ENCODE measurements at regions of chr11 and their contacts with region 1.

Region 1: GRCh38 chr11:120801801-120802689 is 221.9 kb upstream of the TBCEL start:
- DNase-seq: peak; percentile 83
- H3K4me3 ChIP-seq: no peak overlapping the region; a peak in 1 of 4 replicates
- H3K27ac ChIP-seq: no peak overlapping the region
- H3K4me1 ChIP-seq: peaks cover 0 to 18% of the 10 kb centered on the region in 2 experiments; a peak in 1 of 4 replicates
- H3K27me3 ChIP-seq: no peaks in the 10 kb centered on the region
- CTCF ChIP-seq: peak; percentile 80
- EP300 ChIP-seq: no peak
- RAD21 ChIP-seq: peak; percentile 85

Region 2: DNA sequence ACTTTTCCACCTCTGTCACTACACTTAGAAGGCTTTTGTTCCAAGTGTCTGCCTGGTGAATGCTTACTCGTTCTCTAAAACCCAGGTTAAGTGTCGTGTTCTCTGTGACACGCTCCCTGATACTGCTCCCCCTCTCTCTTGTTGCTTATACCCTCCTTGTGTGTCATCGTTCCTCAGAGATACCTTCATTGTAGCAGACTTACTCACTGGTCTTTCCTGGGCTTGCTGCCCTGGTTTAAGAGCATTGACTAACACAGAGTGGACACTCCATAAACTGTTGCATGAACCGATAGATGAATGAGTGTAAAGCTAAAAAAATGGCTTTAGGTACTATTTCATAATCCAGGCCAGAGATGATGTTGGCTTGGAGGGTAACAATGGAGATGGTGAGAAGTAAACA is 119.2 kb before region 1 on chr11:
- CTCF ChIA-PET with region 1: interaction called, 19 read pairs
- POLR2A ChIA-PET with region 1: no interaction called
- DNase-seq: no peak
- H3K4me3 ChIP-seq: no peak overlapping the region
- H3K27ac ChIP-seq: no peak overlapping the region
- H3K4me1 ChIP-seq: peaks cover 0 to 3% of the 10 kb centered on the region in 2 experiments; a peak in 1 of 4 replicates
- H3K27me3 ChIP-seq: peaks cover 8% of the 10 kb centered on the region; the same call in 1 of the 2 replicates
- CTCF ChIP-seq: no peak
- EP300 ChIP-seq: no peak
- RAD21 ChIP-seq: no peak

Region 3: GRCh38 chr11:120719348-120719747 is 82.7 kb before region 1 on chr11:
- CTCF ChIA-PET with region 1: interaction called, 13 read pairs
- POLR2A ChIA-PET with region 1: no interaction called
- DNase-seq: no peak
- H3K4me3 ChIP-seq: no peak overlapping the region
- H3K27ac ChIP-seq: no peak overlapping the region
- H3K4me1 ChIP-seq: peaks cover 0 to 3% of the 10 kb centered on the region in 2 experiments; a peak in 1 of 4 replicates
- H3K27me3 ChIP-seq: no peaks in the 10 kb centered on the region
- CTCF ChIP-seq: no peak
- EP300 ChIP-seq: no peak
- RAD21 ChIP-seq: no peak

Region 4: DNA sequence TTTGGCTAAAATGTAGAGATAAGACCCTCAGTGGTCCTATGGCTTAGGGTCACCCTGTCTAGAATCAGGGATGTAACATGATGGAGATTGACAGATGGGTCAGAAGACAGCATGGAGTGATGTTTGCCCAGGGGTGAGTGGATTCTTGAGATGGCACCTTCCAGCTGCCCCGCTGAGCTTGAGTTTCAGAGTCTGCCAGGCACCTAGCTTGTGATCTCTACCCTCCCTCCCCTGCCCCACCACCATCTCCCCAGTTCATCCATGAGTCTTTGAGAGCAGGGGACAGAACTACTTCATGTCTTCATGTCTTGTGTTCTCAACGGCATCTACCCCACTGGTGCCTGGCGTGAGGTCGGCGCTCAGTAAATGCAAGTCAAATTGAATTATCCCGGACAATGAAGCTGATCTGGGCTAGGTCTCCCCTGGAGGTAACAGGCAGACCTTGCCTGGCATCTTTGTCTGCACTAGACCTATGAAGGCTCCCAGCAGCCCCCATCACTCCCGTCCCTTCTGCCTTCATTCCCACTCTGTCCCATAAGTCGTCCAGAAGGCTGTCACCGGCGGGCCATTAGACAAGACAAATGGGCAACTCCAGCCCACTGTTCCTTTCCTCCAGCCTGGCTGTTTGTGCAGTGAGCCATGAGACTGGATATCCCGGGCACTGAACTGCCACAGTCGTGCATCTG is 17.3 kb before region 1 on chr11:
- CTCF ChIA-PET with region 1: interaction called, 29 read pairs
- POLR2A ChIA-PET with region 1: no interaction called
- DNase-seq: peak; percentile 60
- H3K4me3 ChIP-seq: no peak overlapping the region
- H3K27ac ChIP-seq: 0 out of 4 replicates have a peak overlapping the region, but pooled peaks of 1 of the 2 experiments have one; percentile 19
- H3K4me1 ChIP-seq: peaks cover 0 to 17% of the 10 kb centered on the region in 2 experiments; a peak in 1 of 4 replicates
- H3K27me3 ChIP-seq: no peaks in the 10 kb centered on the region
- CTCF ChIP-seq: no peak
- EP300 ChIP-seq: 0 out of 4 replicates have a peak, but pooled peaks of 1 of the 2 experiments have one; percentile 17
- RAD21 ChIP-seq: no peak

Region 5: DNA sequence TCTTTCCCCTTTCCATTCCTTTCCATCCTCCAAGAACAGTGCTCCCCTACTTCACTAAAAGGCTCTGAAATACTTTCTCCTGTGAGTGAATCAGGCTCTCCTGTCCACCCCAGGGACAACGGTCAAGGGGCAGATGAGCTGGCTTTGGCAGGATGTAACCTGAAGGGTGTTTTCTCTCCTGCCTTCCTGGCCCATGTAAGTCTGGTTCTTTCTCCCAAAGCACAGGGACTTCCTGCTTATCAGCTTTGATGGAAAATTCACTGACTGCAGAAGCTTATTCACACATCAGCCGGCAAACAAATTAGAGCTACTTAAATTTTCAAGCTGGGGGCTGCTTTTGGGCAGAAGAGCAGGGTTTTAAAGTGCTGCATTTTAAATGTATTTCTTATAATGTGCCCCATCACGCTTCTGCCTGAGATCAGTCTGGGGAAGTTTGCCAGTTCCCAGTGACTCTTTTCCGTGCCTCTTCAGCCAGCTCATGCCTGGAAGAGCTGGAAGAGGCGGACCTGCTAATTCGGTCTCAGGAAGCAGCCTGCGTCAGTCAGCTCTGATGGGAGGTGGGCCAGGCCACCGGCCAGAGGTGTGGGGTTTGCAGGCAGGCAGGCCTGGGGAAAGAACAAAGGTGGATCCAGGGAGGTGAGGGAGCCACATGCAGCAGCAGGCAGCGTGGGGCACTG is 81.5 kb after region 1 on chr11:
- CTCF ChIA-PET with region 1: interaction called, 15 read pairs
- POLR2A ChIA-PET with region 1: no interaction called
- DNase-seq: peak; percentile 53
- H3K4me3 ChIP-seq: no peak overlapping the region
- H3K27ac ChIP-seq: peak overlapping the region in 1 of 2 experiments; percentile 43; a peak in 2 of 4 replicates
- H3K4me1 ChIP-seq: peaks cover 0 to 30% of the 10 kb centered on the region in 2 experiments; a peak in 2 of 4 replicates
- H3K27me3 ChIP-seq: no peaks in the 10 kb centered on the region
- CTCF ChIP-seq: no peak
- EP300 ChIP-seq: no peak
- RAD21 ChIP-seq: no peak

Region 6: DNA sequence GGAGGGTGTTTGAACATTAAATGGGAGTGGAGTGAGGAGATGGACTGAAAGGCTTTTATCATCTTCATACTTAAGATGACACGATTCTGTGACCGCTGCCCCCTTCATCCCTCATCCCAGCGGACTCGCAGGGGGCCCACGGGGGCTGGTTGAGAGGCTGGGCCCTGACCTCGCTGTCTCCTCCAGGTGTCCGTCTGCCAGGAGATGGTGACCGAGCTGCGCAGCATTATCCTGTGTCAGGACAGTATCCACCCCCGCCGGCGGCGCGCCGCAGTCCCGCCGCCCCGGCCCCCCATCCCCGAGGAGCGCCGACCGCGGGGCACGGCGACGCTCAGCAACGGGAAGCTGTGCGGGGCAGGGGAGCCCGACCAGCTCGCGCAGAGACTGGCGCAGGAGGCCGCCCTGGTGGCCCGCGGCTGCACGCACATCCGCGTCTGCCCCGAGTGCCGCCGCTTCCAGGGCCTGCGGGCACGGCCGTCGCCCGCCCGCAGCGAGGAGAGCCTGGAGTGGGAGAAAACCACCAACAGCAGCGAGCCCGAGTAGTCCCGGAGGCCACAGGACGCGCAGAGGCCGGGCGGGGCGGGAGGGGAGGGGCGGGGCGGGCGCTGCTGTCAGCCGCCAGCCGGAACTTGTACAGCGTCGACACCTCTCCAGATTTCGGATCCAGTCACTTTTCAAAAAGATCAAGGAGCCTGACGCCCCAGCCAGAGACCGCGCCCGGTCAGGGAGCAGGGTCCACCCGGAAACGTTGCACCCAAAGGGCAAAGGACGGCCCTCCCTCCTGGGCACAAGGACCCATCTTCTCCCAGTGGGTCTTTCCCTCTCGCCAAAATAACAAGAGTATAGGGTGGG is 183.9 kb after region 1 on chr11:
- CTCF ChIA-PET with region 1: no interaction called
- POLR2A ChIA-PET with region 1: no interaction called
- DNase-seq: peak; percentile 88
- H3K4me3 ChIP-seq: peak overlapping the region; percentile 43 to 55
- H3K27ac ChIP-seq: no peak overlapping the region
- H3K4me1 ChIP-seq: peaks cover 0 to 5% of the 10 kb centered on the region in 2 experiments; a peak in 1 of 4 replicates
- H3K27me3 ChIP-seq: no peaks in the 10 kb centered on the region; the same call in 1 of the 2 replicates
- CTCF ChIP-seq: peak; percentile 36; the same call in 1 of the 2 replicates
- EP300 ChIP-seq: no peak
- RAD21 ChIP-seq: peak; percentile 4; the same call in 1 of the 2 replicates

Region 7: DNA sequence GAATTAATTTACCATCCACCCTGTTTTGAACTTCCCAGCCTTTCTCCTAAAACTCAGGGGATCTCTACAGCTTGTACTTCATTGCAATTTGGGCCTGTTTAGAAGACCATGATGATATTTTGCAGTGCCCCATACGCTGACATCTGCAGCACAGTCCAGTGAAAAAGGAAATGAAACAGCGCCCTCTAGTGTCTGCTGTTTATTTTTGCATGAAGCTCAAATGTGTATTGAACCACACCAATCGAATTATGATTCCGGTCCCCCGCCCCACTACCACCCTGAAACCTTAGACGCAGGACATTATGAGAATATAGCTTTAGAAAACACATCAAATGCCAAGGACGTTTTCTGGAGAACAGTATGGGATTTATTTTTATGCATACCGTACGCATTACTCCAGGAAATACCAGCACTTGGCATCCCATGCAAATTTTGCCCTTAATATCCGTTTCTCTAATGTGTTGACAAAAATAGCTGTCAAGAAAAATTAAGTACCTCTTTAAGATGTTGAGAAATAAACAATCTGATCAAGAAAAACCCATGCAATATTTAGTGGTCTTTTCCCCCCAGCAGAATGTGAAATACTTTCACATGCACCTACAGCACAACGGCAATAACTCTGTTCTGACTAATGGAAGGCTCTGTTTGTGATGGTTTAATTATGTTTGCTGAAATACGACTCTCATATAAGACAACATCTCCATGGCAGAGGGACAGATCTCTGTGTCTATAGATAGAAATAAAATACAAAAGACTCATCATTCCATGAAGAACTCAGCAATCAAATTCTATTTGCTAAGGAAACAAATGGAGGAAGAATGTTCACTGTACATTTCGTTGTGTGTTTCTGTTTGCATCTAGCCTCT is 392.9 kb after region 1 on chr11:
- CTCF ChIA-PET with region 1: interaction called, 14 read pairs
- POLR2A ChIA-PET with region 1: no interaction called
- DNase-seq: peak; percentile 69
- H3K4me3 ChIP-seq: no peak overlapping the region; a peak in 1 of 4 replicates
- H3K27ac ChIP-seq: no peak overlapping the region
- H3K4me1 ChIP-seq: peaks cover 0 to 2% of the 10 kb centered on the region in 2 experiments; a peak in 2 of 4 replicates
- H3K27me3 ChIP-seq: no peaks in the 10 kb centered on the region; the same call in 1 of the 2 replicates
- CTCF ChIP-seq: peak; percentile 90
- EP300 ChIP-seq: no peak
- RAD21 ChIP-seq: peak; percentile 86

Measured in SK-N-SH (cell line).